ENCODE measurements at regions of chr20 and their contacts with region 1.

Region 1: GRCh38 chr20:49766979-49767521 is 45.6 kb upstream of the SLC9A8 start:
- DNase-seq: no peak
- ATAC-seq: peak; percentile 39; the same call in 1 of the 2 replicates
- H3K4me3 ChIP-seq: no peak overlapping the region
- H3K27ac ChIP-seq: no peak overlapping the region
- H3K4me1 ChIP-seq: peaks cover 0 to 12% of the 10 kb centered on the region in 2 experiments; a peak in 3 of 4 replicates
- H3K27me3 ChIP-seq: no peaks in the 10 kb centered on the region
- CTCF ChIP-seq: no peak
- POLR2A ChIP-seq: no peak
- RAD21 ChIP-seq: no peak

Region 2: DNA sequence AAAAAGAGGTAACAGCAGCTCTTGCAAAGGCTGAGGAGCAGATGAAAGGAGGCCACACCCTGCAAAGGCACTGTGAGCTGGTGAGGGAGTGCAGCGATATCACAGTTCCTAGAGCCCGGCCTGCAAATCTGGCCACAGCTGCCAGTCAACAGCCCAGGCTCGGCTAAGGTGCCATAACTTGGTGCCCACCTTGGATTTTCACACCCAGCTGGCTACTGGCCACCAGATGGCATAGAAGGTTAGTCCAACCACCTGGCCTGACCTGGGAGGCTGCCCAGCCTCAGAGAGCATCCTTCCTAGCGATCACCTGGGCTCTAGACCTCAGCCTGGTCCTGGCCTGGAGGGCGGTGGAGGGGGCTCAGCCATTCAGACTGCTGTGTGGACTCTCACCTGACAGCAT is 331.4 kb before region 1 on chr20:
- CTCF ChIA-PET with region 1: no interaction called
- POLR2A ChIA-PET with region 1: no interaction called
- RAD21 ChIA-PET with region 1: no interaction called
- intact Hi-C with region 1: no loop called
- DNase-seq: no peak
- ATAC-seq: peak; percentile 42; the same call in 1 of the 2 replicates
- H3K4me3 ChIP-seq: no peak overlapping the region
- H3K27ac ChIP-seq: no peak overlapping the region
- H3K4me1 ChIP-seq: no peaks in the 10 kb centered on the region
- H3K27me3 ChIP-seq: peaks cover 9% of the 10 kb centered on the region; the same call in 1 of the 2 replicates
- CTCF ChIP-seq: peak; percentile 12 to 25 (median 16); a peak in 1 of 6 replicates
- POLR2A ChIP-seq: no peak
- RAD21 ChIP-seq: peak; percentile 39

Region 3: DNA sequence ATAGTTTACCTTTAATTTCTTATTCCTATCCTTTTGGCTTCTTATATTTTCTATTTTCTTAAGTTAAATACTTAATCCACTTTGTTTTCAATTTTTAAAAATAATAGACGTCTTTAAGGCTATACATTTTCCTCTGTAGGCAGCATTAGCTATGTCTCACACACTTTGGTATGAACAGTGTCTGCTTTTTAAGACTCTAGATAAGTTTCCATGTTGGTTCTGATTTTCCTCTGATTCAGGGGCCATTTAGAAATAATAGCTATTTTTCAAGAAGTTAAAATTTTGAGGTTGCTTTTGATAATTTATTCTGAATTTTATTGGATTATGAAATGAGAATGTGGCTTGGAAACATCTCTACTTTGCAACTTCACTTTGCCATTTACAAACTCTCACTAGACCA is 144.8 kb before region 1 on chr20:
- CTCF ChIA-PET with region 1: no interaction called
- POLR2A ChIA-PET with region 1: no interaction called
- RAD21 ChIA-PET with region 1: no interaction called
- intact Hi-C with region 1: loop called (anchors 1 kb)
- DNase-seq: no peak
- ATAC-seq: no peak
- H3K4me3 ChIP-seq: no peak overlapping the region
- H3K27ac ChIP-seq: no peak overlapping the region
- H3K4me1 ChIP-seq: peaks cover 0 to under 1% of the 10 kb centered on the region in 2 experiments; a peak in 1 of 4 replicates
- H3K27me3 ChIP-seq: no peaks in the 10 kb centered on the region
- CTCF ChIP-seq: no peak
- POLR2A ChIP-seq: no peak
- RAD21 ChIP-seq: no peak

Region 4: GRCh38 chr20:49832632-49833327 is 65.7 kb after region 1 on chr20:
- CTCF ChIA-PET with region 1: no interaction called
- POLR2A ChIA-PET with region 1: no interaction called
- RAD21 ChIA-PET with region 1: no interaction called
- intact Hi-C with region 1: no loop called
- DNase-seq: no peak
- ATAC-seq: no peak
- H3K4me3 ChIP-seq: no peak overlapping the region
- H3K27ac ChIP-seq: no peak overlapping the region
- H3K4me1 ChIP-seq: no peaks in the 10 kb centered on the region
- H3K27me3 ChIP-seq: no peaks in the 10 kb centered on the region
- CTCF ChIP-seq: no peak
- POLR2A ChIP-seq: no peak
- RAD21 ChIP-seq: no peak

Region 5: GRCh38 chr20:50221501-50222323 is 454.7 kb after region 1 on chr20:
- CTCF ChIA-PET with region 1: no interaction called
- POLR2A ChIA-PET with region 1: no interaction called
- RAD21 ChIA-PET with region 1: no interaction called
- intact Hi-C with region 1: no loop called
- DNase-seq: no peak
- ATAC-seq: no peak
- H3K4me3 ChIP-seq: no peak overlapping the region
- H3K27ac ChIP-seq: no peak overlapping the region
- H3K4me1 ChIP-seq: peaks cover 11 to 14% of the 10 kb centered on the region in 2 experiments; a peak in 3 of 4 replicates
- H3K27me3 ChIP-seq: no peaks in the 10 kb centered on the region
- CTCF ChIP-seq: no peak
- POLR2A ChIP-seq: no peak
- RAD21 ChIP-seq: no peak